Ovary (tissue), 10 donors: ENCODE measurements at regions of chr20 and their contacts with region 1.

Region 1: GRCh38 chr20:33154252-33154651 is 13.7 kb upstream of the BPIFA2 start:
- DNase-seq: no peak
- H3K4me3 ChIP-seq: no peak overlapping the region
- H3K27ac ChIP-seq: no peak overlapping the region
- H3K4me1 ChIP-seq: no peaks in the 10 kb centered on the region
- H3K27me3 ChIP-seq: no peaks in the 10 kb centered on the region
- CTCF ChIP-seq: no peak
- EP300 ChIP-seq: no peak
- POLR2A ChIP-seq: no peak

Region 2: GRCh38 chr20:34010405-34010931 is 856.2 kb after region 1 on chr20:
- intact Hi-C with region 1: loop called in 1 of 4 experiments (anchors 5 kb)
- DNase-seq: no peak
- H3K4me3 ChIP-seq: no peak overlapping the region
- H3K27ac ChIP-seq: no peak overlapping the region
- H3K4me1 ChIP-seq: peaks cover 9% of the 10 kb centered on the region
- H3K27me3 ChIP-seq: no peaks in the 10 kb centered on the region
- CTCF ChIP-seq: no peak
- EP300 ChIP-seq: no peak
- POLR2A ChIP-seq: no peak